AG04450 (cell line): ENCODE measurements at regions of chr2 and their contacts with region 1.

Region 1: DNA sequence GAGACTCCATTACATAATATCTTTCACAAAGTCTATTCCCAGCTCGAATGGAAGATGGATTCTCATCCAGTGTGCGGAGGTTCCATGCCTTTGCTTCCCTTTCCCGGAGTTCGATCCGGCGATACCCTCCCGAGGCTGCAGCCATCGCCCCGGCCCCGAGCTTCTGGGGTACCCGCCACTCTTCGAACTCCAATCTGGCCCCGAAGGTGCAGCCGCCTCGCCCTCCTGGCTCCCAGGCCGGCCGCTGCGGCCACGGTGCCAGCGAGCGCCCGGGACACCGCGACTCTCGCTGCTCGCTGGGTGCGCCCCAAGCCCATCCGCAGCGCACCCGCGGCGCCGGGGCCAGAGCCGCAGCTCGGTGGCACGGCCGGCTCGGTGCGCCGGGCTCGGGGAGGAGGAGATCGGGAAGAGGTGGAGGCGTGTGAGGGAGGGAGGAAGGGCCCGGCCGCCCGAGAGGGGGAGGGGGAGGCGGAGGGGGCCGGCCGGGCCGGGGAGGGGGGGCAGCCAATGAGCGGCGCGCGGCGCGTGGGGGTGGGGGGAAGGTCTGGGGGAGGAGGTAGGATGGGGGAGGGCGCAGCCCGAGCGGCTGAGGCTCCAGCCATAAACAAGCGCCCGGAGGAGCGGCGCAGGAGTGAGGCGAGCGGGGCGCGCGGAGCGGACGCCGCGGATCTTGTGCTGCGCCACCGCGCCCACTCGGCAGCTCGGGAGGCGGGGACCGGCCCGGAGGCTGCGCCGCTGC is at the start of gene CRIM1:
- DNase-seq: peak; percentile 78
- H3K4me3 ChIP-seq: peak within 1 kb of the TSS; percentile 94
- H3K27ac ChIP-seq: peak within 1 kb of the TSS; percentile 77
- H3K27me3 ChIP-seq: no peaks in the 10 kb centered on the region
- CTCF ChIP-seq: no peak
- polyA plus RNA-seq, gene CRIM1: 142 and 168 TPM in 2 replicates

Region 2: DNA sequence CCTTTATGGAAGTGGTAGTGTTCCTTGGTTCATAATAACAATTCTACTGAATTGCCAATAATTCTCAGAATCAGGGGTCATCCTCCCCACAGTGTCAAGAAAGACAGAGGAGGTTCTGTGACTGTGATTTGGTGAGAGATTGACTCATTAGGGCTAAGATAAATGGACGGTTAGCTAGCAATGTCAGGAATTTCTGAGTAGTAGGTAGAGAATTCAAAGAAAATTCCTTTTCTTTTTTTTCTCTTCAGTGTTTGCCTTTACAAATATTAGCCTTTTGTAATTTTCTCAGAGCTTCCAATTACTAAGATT is 16.5 kb before region 1 on chr2:
- CTCF ChIA-PET with region 1: interaction called, 17 read pairs
- POLR2A ChIA-PET with region 1: interaction called, 5 read pairs
- DNase-seq: no peak
- H3K4me3 ChIP-seq: no peak overlapping the region
- H3K27ac ChIP-seq: no peak overlapping the region
- H3K27me3 ChIP-seq: no peaks in the 10 kb centered on the region
- CTCF ChIP-seq: no peak

Region 3: GRCh38 chr2:36450466-36451196 is 95.3 kb after region 1 on chr2:
- CTCF ChIA-PET with region 1: interaction called, 4 read pairs
- POLR2A ChIA-PET with region 1: interaction called, 13 read pairs
- DNase-seq: no peak
- H3K4me3 ChIP-seq: no peak overlapping the region
- H3K27ac ChIP-seq: peak overlapping the region; percentile 48
- H3K27me3 ChIP-seq: no peaks in the 10 kb centered on the region
- CTCF ChIP-seq: no peak

Region 4: GRCh38 chr2:36486546-36487044 is 131.3 kb after region 1 on chr2:
- CTCF ChIA-PET with region 1: interaction called, 5 read pairs
- POLR2A ChIA-PET with region 1: interaction called, 12 read pairs
- DNase-seq: peak; percentile 49
- H3K4me3 ChIP-seq: no peak overlapping the region
- H3K27ac ChIP-seq: peak overlapping the region; percentile 88
- H3K27me3 ChIP-seq: no peaks in the 10 kb centered on the region
- CTCF ChIP-seq: no peak

Region 5: DNA sequence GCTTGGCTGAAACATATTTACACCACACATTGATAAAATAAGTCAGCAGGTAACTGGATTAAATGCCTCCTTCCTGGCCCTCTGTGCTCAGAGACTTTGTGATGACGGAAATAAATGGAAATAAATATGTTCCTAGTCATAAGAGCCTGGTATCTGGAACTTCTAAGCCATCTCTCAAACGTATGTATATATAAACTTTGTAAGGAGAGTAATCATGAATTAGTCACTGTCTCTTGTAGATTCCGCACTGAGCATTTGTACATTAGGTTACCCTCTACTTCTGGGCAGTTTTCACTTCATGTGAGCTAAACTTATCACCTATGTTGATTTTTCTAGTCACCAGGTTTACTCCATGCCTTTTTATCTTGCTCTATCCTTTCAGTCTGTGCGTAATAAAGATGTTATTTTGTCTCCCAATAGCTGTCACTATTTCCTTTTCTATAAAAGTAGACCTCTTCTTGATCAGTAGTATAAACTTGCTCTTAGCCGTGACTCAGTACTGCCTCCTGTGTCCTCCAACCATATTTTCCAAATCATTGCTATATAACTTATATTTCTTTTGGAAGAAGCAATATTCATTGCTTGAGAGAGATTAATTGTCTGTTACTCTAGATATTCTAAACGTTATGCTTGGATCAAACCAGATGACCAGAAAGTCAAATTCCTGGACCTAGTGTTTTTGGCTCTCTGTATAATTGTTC is 189.5 kb after region 1 on chr2:
- CTCF ChIA-PET with region 1: interaction called, 16 read pairs
- POLR2A ChIA-PET with region 1: no interaction called
- DNase-seq: no peak
- H3K4me3 ChIP-seq: no peak overlapping the region
- H3K27ac ChIP-seq: no peak overlapping the region
- H3K27me3 ChIP-seq: no peaks in the 10 kb centered on the region
- CTCF ChIP-seq: peak; percentile 48

Region 6: DNA sequence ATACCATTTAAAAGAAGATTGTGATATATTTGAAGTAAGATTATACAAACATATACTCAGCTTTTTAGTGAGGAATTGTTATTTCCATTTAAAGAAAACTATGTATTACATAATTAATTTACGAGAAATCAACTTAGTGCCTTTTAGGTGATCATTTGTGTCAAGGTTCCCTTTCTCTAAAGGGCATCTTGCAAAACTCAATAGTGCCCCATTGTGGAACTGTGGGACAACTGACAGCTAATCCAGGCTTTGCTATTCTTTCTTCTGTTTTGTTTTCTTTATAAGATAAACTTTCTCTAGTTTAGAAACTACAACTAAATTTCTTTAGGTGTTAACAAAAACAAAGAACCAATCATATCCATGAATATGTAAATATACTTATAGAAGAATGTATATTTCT is 316.9 kb after region 1 on chr2:
- CTCF ChIA-PET with region 1: interaction called, 19 read pairs
- POLR2A ChIA-PET with region 1: no interaction called
- DNase-seq: no peak
- H3K4me3 ChIP-seq: no peak overlapping the region
- H3K27ac ChIP-seq: no peak overlapping the region
- H3K27me3 ChIP-seq: no peaks in the 10 kb centered on the region
- CTCF ChIP-seq: peak; percentile 69